ENCODE measurements at regions of chr12 and their contacts with region 1.

Region 1: DNA sequence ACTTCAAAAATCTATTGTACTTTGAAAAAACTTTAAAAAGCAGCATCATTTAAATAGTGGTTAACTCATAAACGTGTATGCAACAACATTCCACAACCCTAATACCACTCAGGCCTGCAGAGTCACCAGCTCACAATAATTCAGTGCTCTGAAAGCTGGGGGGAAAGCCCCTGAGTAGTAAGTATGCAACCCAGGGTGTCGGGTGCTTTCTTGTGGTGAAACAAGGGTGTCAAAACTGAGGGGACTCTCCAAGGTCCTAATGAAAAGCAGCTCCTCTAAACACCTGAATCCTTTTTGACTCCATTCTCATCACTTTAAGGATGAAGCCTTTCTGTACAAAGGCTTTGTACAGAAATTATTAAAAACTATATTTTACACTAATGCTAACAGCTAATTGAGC is 33.7 kb downstream of the FGFR1OP2 start:
- DNase-seq: peak; percentile 83
- ATAC-seq: peak; percentile 100
- H3K4me3 Mint-ChIP-seq: no peak overlapping the region
- H3K27ac Mint-ChIP-seq: no peak overlapping the region
- H3K4me1 Mint-ChIP-seq: peaks cover 22% of the 10 kb centered on the region
- H3K27me3 Mint-ChIP-seq: no peaks in the 10 kb centered on the region

Region 2: GRCh38 chr12:26863502-26863901 is 108.5 kb before region 1 on chr12:
- CTCF ChIA-PET with region 1: interaction called, 6 read pairs
- POLR2A ChIA-PET with region 1: interaction called, 15 read pairs
- intact Hi-C with region 1: no loop called
- DNase-seq: peak; percentile 34
- ATAC-seq: peak; percentile 24
- H3K4me3 Mint-ChIP-seq: no peak overlapping the region
- H3K27ac Mint-ChIP-seq: no peak overlapping the region
- H3K4me1 Mint-ChIP-seq: peaks cover 13% of the 10 kb centered on the region
- H3K27me3 Mint-ChIP-seq: peaks cover 3% of the 10 kb centered on the region

Region 3: GRCh38 chr12:27003421-27004381 is 31.7 kb after region 1 on chr12:
- CTCF ChIA-PET with region 1: no interaction called
- POLR2A ChIA-PET with region 1: no interaction called
- intact Hi-C with region 1: no loop called
- DNase-seq: no peak
- ATAC-seq: no peak
- H3K4me3 Mint-ChIP-seq: no peak overlapping the region
- H3K27ac Mint-ChIP-seq: no peak overlapping the region
- H3K4me1 Mint-ChIP-seq: peaks cover 22% of the 10 kb centered on the region
- H3K27me3 Mint-ChIP-seq: no peaks in the 10 kb centered on the region

Region 4: GRCh38 chr12:27186022-27186839 is 214.3 kb after region 1 on chr12:
- CTCF ChIA-PET with region 1: no interaction called
- POLR2A ChIA-PET with region 1: interaction called, 12 read pairs
- intact Hi-C with region 1: no loop called
- DNase-seq: no peak
- ATAC-seq: no peak
- H3K4me3 Mint-ChIP-seq: no peak overlapping the region
- H3K27ac Mint-ChIP-seq: peak overlapping the region; percentile 8
- H3K4me1 Mint-ChIP-seq: peaks cover 18% of the 10 kb centered on the region
- H3K27me3 Mint-ChIP-seq: no peaks in the 10 kb centered on the region